ENCODE measurements at regions of chr18 and their contacts with region 1.

Region 1: DNA sequence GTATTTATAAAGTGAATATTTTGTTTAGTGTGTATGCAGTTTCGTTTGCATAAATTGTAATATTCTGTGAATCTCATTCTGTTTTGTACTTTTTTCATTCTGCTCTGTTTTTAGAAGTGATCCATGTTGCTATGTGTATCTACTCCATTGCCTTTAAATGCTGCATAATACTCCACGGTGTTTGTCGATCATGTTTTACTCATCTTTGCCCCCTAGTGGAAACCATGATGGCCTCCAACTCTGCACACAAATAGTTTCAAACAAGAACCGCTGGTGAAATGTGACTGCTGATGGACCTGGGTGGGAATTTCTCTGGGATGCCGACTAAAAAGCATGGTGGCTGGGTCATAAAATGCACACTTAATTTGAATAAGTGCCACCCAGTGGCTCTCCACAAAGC is 32.0 kb upstream of the SKOR2 start:
- DNase-seq: peak; percentile 30
- H3K4me3 Mint-ChIP-seq: no peak overlapping the region
- H3K27ac Mint-ChIP-seq: no peak overlapping the region
- H3K4me1 Mint-ChIP-seq: no peaks in the 10 kb centered on the region
- H3K27me3 Mint-ChIP-seq: peaks cover 95% of the 10 kb centered on the region
- CTCF ChIP-seq: peak; percentile 58

Region 2: DNA sequence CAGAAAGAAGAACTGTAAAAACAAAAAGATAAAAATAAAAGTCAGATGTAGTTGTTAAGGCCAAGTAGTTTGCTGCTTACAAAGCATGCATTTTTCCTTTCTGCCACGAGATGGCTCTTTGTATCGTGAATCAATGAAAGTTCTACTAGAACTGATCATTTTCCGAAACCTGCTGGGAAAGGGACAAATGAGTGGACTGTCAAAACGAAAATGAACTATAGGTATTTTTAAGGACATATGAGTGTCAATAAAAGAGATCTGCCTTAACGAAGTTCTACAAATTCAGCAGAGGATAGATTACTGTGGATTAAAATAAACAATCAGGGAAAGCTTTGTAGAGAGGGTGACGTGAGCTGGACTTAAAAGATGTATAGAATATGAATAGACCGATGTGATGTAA is 233.0 kb before region 1 on chr18:
- CTCF ChIA-PET with region 1: no interaction called
- intact Hi-C with region 1: loop called (anchors 1 kb)
- DNase-seq: peak; percentile 32
- H3K4me3 Mint-ChIP-seq: no peak overlapping the region
- H3K27ac Mint-ChIP-seq: no peak overlapping the region
- H3K4me1 Mint-ChIP-seq: peaks cover 8% of the 10 kb centered on the region
- H3K27me3 Mint-ChIP-seq: peaks cover 37% of the 10 kb centered on the region
- CTCF ChIP-seq: peak; percentile 62

Region 3: GRCh38 chr18:47100214-47100831 is 183.2 kb before region 1 on chr18:
- CTCF ChIA-PET with region 1: no interaction called
- intact Hi-C with region 1: loop called (anchors 2 kb)
- DNase-seq: peak; percentile 67
- H3K4me3 Mint-ChIP-seq: no peak overlapping the region
- H3K27ac Mint-ChIP-seq: no peak overlapping the region
- H3K4me1 Mint-ChIP-seq: no peaks in the 10 kb centered on the region
- H3K27me3 Mint-ChIP-seq: no peaks in the 10 kb centered on the region
- CTCF ChIP-seq: peak; percentile 72

Region 4: GRCh38 chr18:47215554-47216138 is 67.8 kb before region 1 on chr18:
- CTCF ChIA-PET with region 1: no interaction called
- intact Hi-C with region 1: loop called (anchors 1 kb)
- DNase-seq: peak; percentile 26
- H3K4me3 Mint-ChIP-seq: no peak overlapping the region
- H3K27ac Mint-ChIP-seq: no peak overlapping the region
- H3K4me1 Mint-ChIP-seq: no peaks in the 10 kb centered on the region
- H3K27me3 Mint-ChIP-seq: peaks cover 74% of the 10 kb centered on the region
- CTCF ChIP-seq: no peak

Region 5: GRCh38 chr18:47756364-47757016 is 473.0 kb after region 1 on chr18:
- CTCF ChIA-PET with region 1: no interaction called
- intact Hi-C with region 1: loop called (anchors 5 kb)
- DNase-seq: peak; percentile 78
- H3K4me3 Mint-ChIP-seq: no peak overlapping the region
- H3K27ac Mint-ChIP-seq: no peak overlapping the region
- H3K4me1 Mint-ChIP-seq: no peaks in the 10 kb centered on the region
- H3K27me3 Mint-ChIP-seq: peaks cover 55% of the 10 kb centered on the region
- CTCF ChIP-seq: peak; percentile 92

Measured in Calu3 (cell line).